Right ventricle myocardium inferior (tissue), 1 donor: ENCODE measurements at regions of chr16 and their contacts with region 1.

Region 1: GRCh38 chr16:21584817-21585216 is 14.6 kb upstream of the METTL9 start:
- DNase-seq: no peak
- ATAC-seq: no peak

Region 2: GRCh38 chr16:21641916-21642315 is 57.1 kb after region 1 on chr16:
- intact Hi-C with region 1: loop called (anchors 2 kb)
- DNase-seq: no peak
- ATAC-seq: no peak